Prostate gland (tissue), 2 donors: ENCODE measurements at regions of chr4 and their contacts with region 1.

Region 1: GRCh38 chr4:147590249-147590920 is 26.8 kb upstream of the TMEM184C start:
- DNase-seq: peak; percentile 25
- H3K4me3 ChIP-seq: no peak overlapping the region
- H3K27ac ChIP-seq: no peak overlapping the region
- H3K4me1 ChIP-seq: no peaks in the 10 kb centered on the region
- H3K27me3 ChIP-seq: no peaks in the 10 kb centered on the region
- CTCF ChIP-seq: peak; percentile 47 to 75 (median 74)
- POLR2A ChIP-seq: no peak

Region 2: DNA sequence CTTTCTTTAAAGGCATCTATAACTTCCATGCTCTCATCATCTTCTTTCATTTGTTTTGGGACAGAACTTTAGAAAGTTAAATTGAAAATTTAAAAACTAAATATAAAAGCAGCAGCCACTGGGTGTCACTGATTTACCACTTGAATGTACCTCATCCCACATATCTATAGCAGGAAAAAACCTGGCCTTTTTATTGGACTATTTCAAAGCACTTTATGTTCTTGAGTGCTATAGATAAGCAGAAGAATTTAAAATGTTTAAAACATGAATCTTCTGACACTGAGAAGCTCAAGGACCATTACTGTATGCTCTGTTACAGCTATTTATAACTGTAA is 479.4 kb before region 1 on chr4:
- intact Hi-C with region 1: loop called (anchors 2 kb)
- DNase-seq: no peak
- H3K4me3 ChIP-seq: no peak overlapping the region
- H3K27ac ChIP-seq: no peak overlapping the region
- H3K4me1 ChIP-seq: no peaks in the 10 kb centered on the region
- H3K27me3 ChIP-seq: no peaks in the 10 kb centered on the region
- CTCF ChIP-seq: peak in 3 of 4 experiments; percentile 38 to 67 (median 44)
- POLR2A ChIP-seq: no peak